ENCODE measurements at regions of chr4 and their contacts with region 1.

Region 1: GRCh38 chr4:184745831-184746795 is 12.2 kb upstream of the CENPU start:
- DNase-seq: no peak
- ATAC-seq: peak; percentile 89
- H3K4me3 ChIP-seq: no peak overlapping the region
- H3K27ac ChIP-seq: no peak overlapping the region
- H3K4me1 ChIP-seq: no peaks in the 10 kb centered on the region
- H3K27me3 ChIP-seq: no peaks in the 10 kb centered on the region
- CTCF ChIP-seq: peak; percentile 77 to 85 (median 82)
- EP300 ChIP-seq: no peak
- POLR2A ChIP-seq: no peak
- RAD21 ChIP-seq: peak; percentile 93

Region 2: DNA sequence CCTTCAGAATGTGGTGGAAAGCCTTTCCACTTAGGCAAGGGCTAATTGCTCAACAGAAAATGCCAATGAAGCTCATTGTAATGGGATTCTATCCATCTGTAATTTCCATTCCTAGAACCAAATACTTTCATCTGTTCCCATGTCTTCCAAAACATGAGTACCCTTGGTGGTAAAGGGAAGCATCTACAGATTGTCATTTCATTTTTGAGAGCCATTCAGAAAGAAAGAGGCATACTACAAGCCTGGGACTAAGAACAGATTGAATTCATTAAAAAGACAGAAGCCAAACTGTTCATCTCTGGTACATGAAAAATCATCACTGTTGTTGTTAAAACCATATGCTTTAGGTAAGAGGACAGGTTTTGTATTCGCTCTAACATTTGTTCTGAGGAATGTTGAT is 1785.4 kb before region 1 on chr4:
- CTCF ChIA-PET with region 1: no interaction called
- POLR2A ChIA-PET with region 1: no interaction called
- RAD21 ChIA-PET with region 1: no interaction called
- SMC1A ChIA-PET with region 1: no interaction called
- in situ Hi-C with region 1: no loop called
- intact Hi-C with region 1: no loop called
- DNase-seq: no peak
- ATAC-seq: no peak
- H3K4me3 ChIP-seq: no peak overlapping the region
- H3K27ac ChIP-seq: no peak overlapping the region
- H3K4me1 ChIP-seq: no peaks in the 10 kb centered on the region
- H3K27me3 ChIP-seq: no peaks in the 10 kb centered on the region; a peak in 1 of 4 replicates
- CTCF ChIP-seq: no peak
- EP300 ChIP-seq: no peak
- POLR2A ChIP-seq: no peak
- RAD21 ChIP-seq: no peak

Region 3: GRCh38 chr4:184246426-184246825 is 499.7 kb before region 1 on chr4:
- CTCF ChIA-PET with region 1: no interaction called
- POLR2A ChIA-PET with region 1: no interaction called
- RAD21 ChIA-PET with region 1: no interaction called
- SMC1A ChIA-PET with region 1: no interaction called
- in situ Hi-C with region 1: no loop called
- intact Hi-C with region 1: no loop called
- DNase-seq: no peak
- ATAC-seq: no peak
- H3K4me3 ChIP-seq: no peak overlapping the region
- H3K27ac ChIP-seq: no peak overlapping the region
- H3K4me1 ChIP-seq: no peaks in the 10 kb centered on the region
- H3K27me3 ChIP-seq: no peaks in the 10 kb centered on the region
- CTCF ChIP-seq: no peak
- EP300 ChIP-seq: no peak
- POLR2A ChIP-seq: no peak
- RAD21 ChIP-seq: no peak

Region 4: GRCh38 chr4:184733654-184734524 is 12.2 kb before region 1 on chr4 and contains the start of gene CENPU:
- CTCF ChIA-PET with region 1: interaction called, 16 read pairs
- POLR2A ChIA-PET with region 1: interaction called, 4 read pairs
- RAD21 ChIA-PET with region 1: interaction called, 4 read pairs
- SMC1A ChIA-PET with region 1: interaction called, 13 read pairs
- in situ Hi-C with region 1: no loop called
- intact Hi-C with region 1: no loop called
- DNase-seq: peak; percentile 94
- ATAC-seq: peak; percentile 93
- H3K4me3 ChIP-seq: peak within 1 kb of the TSS; percentile 91
- H3K27ac ChIP-seq: peak within 1 kb of the TSS; percentile 81
- H3K4me1 ChIP-seq: peaks cover 9% of the 10 kb centered on the region
- H3K27me3 ChIP-seq: no peaks in the 10 kb centered on the region
- CTCF ChIP-seq: no peak
- EP300 ChIP-seq: no peak
- POLR2A ChIP-seq: peak; percentile 91
- RAD21 ChIP-seq: 0 out of 2 replicates have a peak, but pooled peaks have one; percentile 22
- polyA plus RNA-seq, gene CENPU: 26.6 to 46.5 TPM

Region 5: GRCh38 chr4:184845367-184846021 is 99.4 kb after region 1 on chr4:
- CTCF ChIA-PET with region 1: interaction called, 11 read pairs
- POLR2A ChIA-PET with region 1: no interaction called
- RAD21 ChIA-PET with region 1: interaction called, 8 read pairs
- SMC1A ChIA-PET with region 1: interaction called, 6 read pairs
- in situ Hi-C with region 1: no loop called
- intact Hi-C with region 1: no loop called
- DNase-seq: no peak
- ATAC-seq: peak; percentile 68
- H3K4me3 ChIP-seq: no peak overlapping the region
- H3K27ac ChIP-seq: no peak overlapping the region
- H3K4me1 ChIP-seq: peaks cover 28% of the 10 kb centered on the region
- H3K27me3 ChIP-seq: no peaks in the 10 kb centered on the region
- CTCF ChIP-seq: no peak
- EP300 ChIP-seq: peak; percentile 56 to 64; a peak in 2 of 4 replicates
- POLR2A ChIP-seq: no peak
- RAD21 ChIP-seq: no peak

Region 6: DNA sequence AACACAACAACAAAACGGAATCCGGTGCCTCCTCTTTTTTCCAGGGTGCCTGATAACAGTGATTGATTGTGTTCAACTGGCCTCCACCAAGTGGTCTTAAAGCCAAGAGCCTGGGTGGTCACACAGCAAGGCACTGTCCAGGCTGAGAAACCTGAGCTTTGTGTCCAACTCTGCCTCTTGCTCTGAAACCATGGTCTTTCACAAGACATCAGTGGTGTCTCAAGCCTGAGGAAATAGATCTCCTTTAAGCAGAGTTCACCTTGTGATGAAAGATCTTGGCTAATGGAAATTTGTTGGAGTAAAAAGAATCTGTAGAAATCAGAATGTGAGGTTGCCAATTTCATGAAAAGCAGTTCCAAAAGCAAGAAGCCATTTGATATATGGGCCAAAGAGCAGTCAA is 126.9 kb after region 1 on chr4:
- CTCF ChIA-PET with region 1: no interaction called
- POLR2A ChIA-PET with region 1: no interaction called
- RAD21 ChIA-PET with region 1: no interaction called
- SMC1A ChIA-PET with region 1: no interaction called
- in situ Hi-C with region 1: no loop called
- intact Hi-C with region 1: no loop called
- DNase-seq: no peak
- ATAC-seq: no peak
- H3K4me3 ChIP-seq: no peak overlapping the region
- H3K27ac ChIP-seq: no peak overlapping the region
- H3K4me1 ChIP-seq: no peaks in the 10 kb centered on the region
- H3K27me3 ChIP-seq: no peaks in the 10 kb centered on the region
- CTCF ChIP-seq: no peak
- EP300 ChIP-seq: no peak
- POLR2A ChIP-seq: no peak
- RAD21 ChIP-seq: no peak

Region 7: DNA sequence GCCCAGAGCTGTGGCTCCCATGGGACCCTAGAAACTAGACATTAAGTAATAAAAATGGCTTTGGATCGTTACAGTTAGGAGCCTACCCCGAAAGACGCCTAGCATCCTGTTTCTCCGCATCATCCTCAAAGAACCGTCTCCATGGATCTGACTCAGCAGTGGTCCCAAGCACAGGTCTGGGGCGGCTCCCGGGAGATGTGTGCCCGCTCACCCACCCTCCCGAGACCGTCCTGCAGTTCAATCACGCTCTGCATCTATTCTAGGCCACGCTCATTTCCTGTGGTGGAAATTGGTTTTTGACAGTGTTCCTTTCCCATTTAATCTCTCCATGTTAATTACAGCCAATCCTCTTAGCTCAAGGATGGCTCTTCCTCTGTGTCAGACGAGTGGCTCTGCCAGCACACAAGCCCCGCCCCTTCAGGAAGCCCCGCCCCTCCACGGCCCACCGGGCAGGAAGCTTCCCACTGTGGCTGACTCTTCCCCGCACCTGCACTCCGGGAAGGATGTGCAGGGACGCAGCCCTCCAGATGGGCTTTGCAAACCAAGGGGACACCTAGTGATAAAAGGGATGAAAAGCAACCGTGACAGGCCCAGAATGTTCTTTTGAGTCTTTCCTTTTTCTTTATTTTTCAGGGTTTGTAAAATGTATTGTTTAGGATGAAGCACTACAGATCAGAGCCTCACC is 237.7 kb after region 1 on chr4:
- CTCF ChIA-PET with region 1: interaction called, 33 read pairs
- POLR2A ChIA-PET with region 1: no interaction called
- RAD21 ChIA-PET with region 1: interaction called, 40 read pairs
- SMC1A ChIA-PET with region 1: interaction called, 13 read pairs
- in situ Hi-C with region 1: loop called (anchors 5 kb)
- intact Hi-C with region 1: loop called (anchors 1 kb)
- DNase-seq: peak; percentile 24
- ATAC-seq: peak; percentile 90
- H3K4me3 ChIP-seq: no peak overlapping the region
- H3K27ac ChIP-seq: no peak overlapping the region
- H3K4me1 ChIP-seq: 0 out of 2 replicates have a peak, but pooled peaks cover 4% of the 10 kb centered on the region
- H3K27me3 ChIP-seq: peaks cover 0 to 3% of the 10 kb centered on the region in 2 experiments; a peak in 3 of 4 replicates
- CTCF ChIP-seq: peak; percentile 44 to 62 (median 47)
- EP300 ChIP-seq: no peak
- POLR2A ChIP-seq: no peak
- RAD21 ChIP-seq: peak; percentile 87

Region 8: DNA sequence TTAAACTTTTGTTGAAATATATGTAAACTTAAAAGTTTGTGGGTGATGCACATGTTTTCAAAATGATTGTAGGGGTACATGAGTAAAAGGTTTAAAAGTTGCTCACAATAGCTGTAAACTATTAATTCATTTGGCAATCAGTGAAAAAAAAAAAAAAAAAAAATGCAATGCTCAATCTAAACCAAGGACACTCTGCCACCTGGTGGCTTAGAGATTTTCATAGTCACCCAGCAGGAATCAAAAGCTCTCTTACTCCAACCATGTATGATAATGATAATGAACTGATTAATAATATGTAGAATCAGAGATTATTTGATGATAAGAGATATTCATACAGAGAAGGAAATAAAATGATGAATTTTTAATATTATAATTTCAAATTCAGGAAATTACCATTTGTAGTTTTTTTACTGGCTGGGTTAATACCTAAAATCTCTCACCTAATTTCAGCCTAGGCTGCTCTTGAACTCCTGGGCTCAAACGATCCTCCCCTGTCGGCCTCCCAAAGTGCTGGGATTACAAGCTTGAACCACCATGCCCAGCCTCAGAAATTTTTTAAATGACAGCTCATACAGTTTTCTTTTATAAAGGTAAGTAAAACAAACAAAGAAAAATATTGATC is 350.0 kb after region 1 on chr4:
- CTCF ChIA-PET with region 1: interaction called, 15 read pairs
- POLR2A ChIA-PET with region 1: no interaction called
- RAD21 ChIA-PET with region 1: interaction called, 13 read pairs
- SMC1A ChIA-PET with region 1: interaction called, 12 read pairs
- in situ Hi-C with region 1: no loop called
- intact Hi-C with region 1: no loop called
- DNase-seq: no peak
- ATAC-seq: peak; percentile 56; the same call in 2 of the 3 replicates
- H3K4me3 ChIP-seq: no peak overlapping the region
- H3K27ac ChIP-seq: no peak overlapping the region
- H3K4me1 ChIP-seq: no peaks in the 10 kb centered on the region
- H3K27me3 ChIP-seq: peaks cover 2 to 3% of the 10 kb centered on the region in 2 experiments; a peak in 1 of 4 replicates
- CTCF ChIP-seq: peak; percentile 34 to 54 (median 42); a peak in 5 of 6 replicates
- EP300 ChIP-seq: no peak
- POLR2A ChIP-seq: no peak
- RAD21 ChIP-seq: peak; percentile 74